Astrocyte of the cerebellum (primary cell): ENCODE measurements at regions of chr17 and their contacts with region 1.

Region 1: GRCh38 chr17:47855737-47856136 is 4.8 kb upstream of the SP6 start:
- DNase-seq: no peak
- H3K4me3 ChIP-seq: no peak overlapping the region
- CTCF ChIP-seq: no peak

Region 2: GRCh38 chr17:47776330-47777197 is 79.2 kb before region 1 on chr17:
- in situ Hi-C with region 1: no loop called
- DNase-seq: no peak
- H3K4me3 ChIP-seq: no peak overlapping the region
- CTCF ChIP-seq: peak; percentile 73

Region 3: DNA sequence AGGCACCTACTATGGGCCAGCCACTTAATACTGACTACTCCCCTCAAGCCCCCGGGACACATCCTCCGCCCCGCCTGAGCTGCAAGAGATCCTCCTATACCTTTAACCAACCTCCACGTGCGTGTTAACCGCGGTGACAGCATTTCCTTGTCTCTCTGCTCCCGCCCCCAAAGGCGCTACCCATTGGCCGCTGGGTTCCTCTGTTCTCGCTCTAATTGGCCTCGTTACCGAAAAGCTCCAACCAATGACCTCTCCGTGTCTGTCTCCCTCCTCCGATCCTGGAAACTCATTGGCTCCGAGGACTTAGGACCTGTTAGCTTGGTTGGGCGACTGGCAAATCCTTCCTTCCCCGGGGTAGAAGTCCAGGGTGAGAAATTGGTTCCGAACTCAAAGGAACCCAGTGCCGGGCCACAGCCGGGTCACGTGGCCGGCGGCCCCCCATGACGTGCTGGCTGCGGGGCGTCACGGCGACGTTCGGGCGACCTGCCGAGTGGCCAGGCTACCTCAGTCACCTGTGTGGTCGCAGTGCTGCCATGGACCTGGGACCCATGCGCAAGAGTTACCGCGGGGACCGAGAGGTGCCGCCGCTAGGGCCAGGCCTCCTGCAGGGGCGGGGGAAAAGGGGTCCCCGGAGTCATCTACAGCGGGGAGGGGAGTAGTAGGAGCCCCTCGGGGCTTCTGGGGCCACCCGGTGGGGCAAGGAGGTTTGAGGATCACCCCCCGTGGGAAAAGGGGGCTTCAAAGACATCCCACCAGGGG is 85.7 kb after region 1 on chr17 and contains the start of gene PNPO:
- in situ Hi-C with region 1: loop called (anchors 5 kb)
- DNase-seq: peak; percentile 96
- H3K4me3 ChIP-seq: peak within 1 kb of the TSS; percentile 52
- CTCF ChIP-seq: no peak